ENCODE measurements at regions of chr18 and their contacts with region 1.

Region 1: GRCh38 chr18:62131301-62131909 is 55.5 kb downstream of the PIGN start:
- DNase-seq: peak; percentile 81
- H3K4me3 Mint-ChIP-seq: no peak overlapping the region
- H3K27ac Mint-ChIP-seq: no peak overlapping the region
- H3K4me1 Mint-ChIP-seq: no peaks in the 10 kb centered on the region
- H3K27me3 Mint-ChIP-seq: no peaks in the 10 kb centered on the region

Region 2: DNA sequence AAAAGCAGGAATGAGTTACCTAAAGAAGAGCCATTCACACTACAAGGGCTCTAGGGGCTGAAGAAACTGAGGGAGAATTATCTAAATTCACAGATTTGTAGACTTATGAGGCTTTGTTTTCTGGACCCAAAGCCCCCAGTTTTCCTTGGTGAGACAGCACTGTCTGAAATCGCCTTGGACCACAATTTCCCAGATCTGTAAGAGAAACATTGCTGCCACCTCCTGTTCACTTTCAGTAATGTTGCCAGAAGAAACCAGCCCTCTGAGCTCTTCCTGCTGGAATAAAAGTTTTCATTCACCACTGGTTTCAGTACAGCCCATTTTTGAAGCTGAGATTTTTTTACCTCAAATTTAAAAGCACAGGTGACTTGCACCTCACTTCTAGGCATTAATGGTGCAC is 628.9 kb before region 1 on chr18:
- CTCF ChIA-PET with region 1: no interaction called
- intact Hi-C with region 1: no loop called
- DNase-seq: peak; percentile 21
- H3K4me3 Mint-ChIP-seq: no peak overlapping the region
- H3K27ac Mint-ChIP-seq: no peak overlapping the region
- H3K4me1 Mint-ChIP-seq: no peaks in the 10 kb centered on the region
- H3K27me3 Mint-ChIP-seq: peaks cover 18% of the 10 kb centered on the region

Region 3: DNA sequence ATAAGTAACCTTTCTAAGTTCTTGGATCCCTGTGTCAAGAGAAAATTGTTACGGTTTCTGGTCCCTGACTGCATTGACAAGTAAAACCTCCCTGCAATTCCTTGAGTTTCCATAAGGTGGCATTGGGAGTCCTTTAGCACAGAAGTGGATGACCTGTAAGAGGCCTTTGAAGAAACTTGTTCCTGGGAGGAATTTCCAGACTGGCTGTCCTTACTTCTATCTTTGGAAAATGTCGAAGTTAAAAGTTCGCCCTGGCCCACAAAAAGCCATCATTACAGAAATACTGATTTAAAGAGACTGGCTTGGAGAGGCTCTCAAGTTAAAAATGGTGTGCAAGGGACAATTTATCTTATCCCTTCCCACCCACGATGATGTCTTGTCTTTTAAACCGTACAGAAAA is 579.8 kb before region 1 on chr18:
- CTCF ChIA-PET with region 1: interaction called, 4 read pairs
- intact Hi-C with region 1: loop called (anchors 1 kb)
- DNase-seq: peak; percentile 32
- H3K4me3 Mint-ChIP-seq: no peak overlapping the region
- H3K27ac Mint-ChIP-seq: no peak overlapping the region
- H3K4me1 Mint-ChIP-seq: peaks cover 7% of the 10 kb centered on the region
- H3K27me3 Mint-ChIP-seq: peaks cover 6% of the 10 kb centered on the region

Region 4: GRCh38 chr18:61581578-61582201 is 549.7 kb before region 1 on chr18:
- CTCF ChIA-PET with region 1: interaction called, 18 read pairs
- intact Hi-C with region 1: loop called (anchors 1 kb)
- DNase-seq: peak; percentile 71
- H3K4me3 Mint-ChIP-seq: no peak overlapping the region
- H3K27ac Mint-ChIP-seq: no peak overlapping the region
- H3K4me1 Mint-ChIP-seq: peaks cover 8% of the 10 kb centered on the region
- H3K27me3 Mint-ChIP-seq: peaks cover 38% of the 10 kb centered on the region

Region 5: GRCh38 chr18:61635901-61636528 is 495.4 kb before region 1 on chr18:
- CTCF ChIA-PET with region 1: interaction called, 8 read pairs
- intact Hi-C with region 1: loop called (anchors 1 kb)
- DNase-seq: peak; percentile 59
- H3K4me3 Mint-ChIP-seq: no peak overlapping the region
- H3K27ac Mint-ChIP-seq: no peak overlapping the region
- H3K4me1 Mint-ChIP-seq: no peaks in the 10 kb centered on the region
- H3K27me3 Mint-ChIP-seq: peaks cover 11% of the 10 kb centered on the region

Region 6: GRCh38 chr18:61860302-61860701 is 271.1 kb before region 1 on chr18:
- CTCF ChIA-PET with region 1: interaction called, 12 read pairs
- intact Hi-C with region 1: loop called (anchors 2 kb)
- DNase-seq: no peak
- H3K4me3 Mint-ChIP-seq: no peak overlapping the region
- H3K27ac Mint-ChIP-seq: no peak overlapping the region
- H3K4me1 Mint-ChIP-seq: no peaks in the 10 kb centered on the region
- H3K27me3 Mint-ChIP-seq: no peaks in the 10 kb centered on the region

Region 7: GRCh38 chr18:61893971-61894750 is 237.2 kb before region 1 on chr18:
- CTCF ChIA-PET with region 1: interaction called, 3 read pairs
- intact Hi-C with region 1: loop called (anchors 2 kb)
- DNase-seq: peak; percentile 81
- H3K4me3 Mint-ChIP-seq: peak overlapping the region; percentile 75
- H3K27ac Mint-ChIP-seq: no peak overlapping the region
- H3K4me1 Mint-ChIP-seq: peaks cover 6% of the 10 kb centered on the region
- H3K27me3 Mint-ChIP-seq: peaks cover 28% of the 10 kb centered on the region

Region 8: GRCh38 chr18:62030091-62030985 is 101.1 kb before region 1 on chr18:
- CTCF ChIA-PET with region 1: no interaction called
- intact Hi-C with region 1: loop called (anchors 2 kb)
- DNase-seq: no peak
- H3K4me3 Mint-ChIP-seq: no peak overlapping the region
- H3K27ac Mint-ChIP-seq: no peak overlapping the region
- H3K4me1 Mint-ChIP-seq: peaks cover 21% of the 10 kb centered on the region
- H3K27me3 Mint-ChIP-seq: no peaks in the 10 kb centered on the region

Region 9: DNA sequence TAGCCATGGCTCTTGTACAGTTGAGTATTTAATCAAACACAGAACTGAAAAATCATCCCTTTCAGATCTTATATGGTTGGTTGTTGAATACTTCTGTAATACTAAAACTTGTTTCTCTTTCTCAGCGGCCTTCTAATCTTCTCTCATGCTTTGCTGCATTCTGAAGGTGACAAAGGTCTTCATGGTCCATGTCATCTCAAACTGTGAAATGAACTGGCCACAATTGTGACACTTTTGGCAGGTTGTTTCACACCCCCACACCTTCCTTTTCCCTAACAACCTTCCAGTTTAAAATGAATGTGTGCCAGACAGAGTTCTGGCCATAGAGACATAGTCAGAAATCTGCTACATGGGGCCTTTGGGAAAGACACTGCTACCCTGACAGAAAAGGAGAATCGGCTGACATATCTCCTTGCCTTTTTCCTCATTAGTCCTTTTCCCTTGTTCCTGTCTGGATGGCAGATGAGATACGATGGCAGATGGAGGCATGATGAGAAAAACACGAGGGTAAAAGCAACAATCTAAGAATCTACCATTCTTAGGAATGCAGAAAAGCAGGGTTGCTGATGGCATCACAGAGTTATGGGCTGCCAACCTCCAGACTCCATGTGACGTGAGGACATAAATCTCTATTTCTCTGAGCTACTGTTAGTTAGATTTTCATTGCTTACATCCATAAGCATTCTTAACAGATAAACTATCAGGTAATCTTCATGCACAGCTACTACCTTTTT is 51.1 kb before region 1 on chr18:
- CTCF ChIA-PET with region 1: no interaction called
- intact Hi-C with region 1: no loop called
- DNase-seq: no peak
- H3K4me3 Mint-ChIP-seq: no peak overlapping the region
- H3K27ac Mint-ChIP-seq: no peak overlapping the region
- H3K4me1 Mint-ChIP-seq: peaks cover 5% of the 10 kb centered on the region
- H3K27me3 Mint-ChIP-seq: no peaks in the 10 kb centered on the region

Measured in activated naive CD4-positive, alpha-beta T cell treated with anti-CD3 and anti-CD28 coated beads for 36 hours (primary cell).